Activated CD4-positive, alpha-beta T cell treated with anti-CD3 and anti-CD28 coated beads for 36 hours (primary cell): ENCODE measurements at regions of chrX and their contacts with region 1.

Region 1: GRCh38 chrX:101051549-101052302 is at the start of gene TRMT2B:
- DNase-seq: peak; percentile 90
- ATAC-seq: peak; percentile 88
- H3K4me3 Mint-ChIP-seq: peak within 1 kb of the TSS; percentile 83
- H3K27ac Mint-ChIP-seq: peak within 1 kb of the TSS; percentile 94
- H3K4me1 Mint-ChIP-seq: peaks cover 29% of the 10 kb centered on the region
- H3K27me3 Mint-ChIP-seq: no peaks in the 10 kb centered on the region
- total RNA-seq, gene TRMT2B: 20.6 to 24.3 TPM

Region 2: DNA sequence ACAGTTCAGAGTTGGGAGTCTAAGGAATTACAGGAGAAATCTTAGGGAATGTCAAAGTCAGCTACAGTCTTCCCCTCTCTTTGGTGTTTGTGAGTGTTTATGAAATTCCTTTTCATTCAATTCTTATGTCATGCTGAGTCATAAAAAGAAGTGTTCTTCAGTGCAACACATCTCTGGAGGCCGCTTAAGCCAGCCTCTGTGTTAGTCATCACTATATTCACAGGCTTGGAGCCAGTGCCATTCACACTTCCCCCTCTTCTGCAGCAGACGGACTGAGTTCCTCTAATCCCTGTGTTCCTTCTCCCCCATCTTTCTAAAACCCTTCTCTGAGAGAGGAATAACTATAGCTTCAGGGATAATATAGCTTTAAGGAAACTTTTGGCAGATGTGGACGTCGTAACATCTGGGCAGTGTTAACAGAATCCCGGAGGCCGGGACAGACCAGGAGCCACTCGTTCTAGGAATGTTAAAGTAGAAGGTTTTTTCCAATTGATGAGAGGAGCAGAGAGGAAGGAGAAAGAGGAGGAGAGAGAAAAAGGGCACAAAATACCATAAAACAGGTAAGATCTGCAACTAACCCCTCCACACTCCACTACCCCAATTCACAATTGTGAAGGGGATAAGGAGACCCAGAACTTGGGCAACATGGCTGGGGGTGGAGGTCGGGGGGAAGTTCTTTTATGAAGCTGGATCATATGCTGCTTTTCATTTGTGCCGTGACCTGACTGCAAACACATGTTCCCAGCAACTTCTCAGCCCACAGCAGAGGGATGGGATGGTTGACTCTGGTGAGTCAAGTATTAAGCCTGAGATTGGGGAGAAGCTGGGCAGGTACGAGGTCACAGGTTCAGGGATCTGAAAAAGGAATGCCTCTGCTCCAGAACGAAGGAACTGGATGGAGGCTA is 407.5 kb before region 1 on chrX and contains the start of gene SRPX2:
- CTCF ChIA-PET with region 1: no interaction called
- POLR2A ChIA-PET with region 1: no interaction called
- intact Hi-C with region 1: no loop called
- DNase-seq: peak; percentile 5
- ATAC-seq: no peak
- H3K4me3 Mint-ChIP-seq: no peak within 1 kb of the TSS
- H3K27ac Mint-ChIP-seq: no peak within 1 kb of the TSS
- H3K4me1 Mint-ChIP-seq: no peaks in the 10 kb centered on the region
- H3K27me3 Mint-ChIP-seq: peaks cover 13% of the 10 kb centered on the region
- total RNA-seq, gene SRPX2: not detected

Region 3: DNA sequence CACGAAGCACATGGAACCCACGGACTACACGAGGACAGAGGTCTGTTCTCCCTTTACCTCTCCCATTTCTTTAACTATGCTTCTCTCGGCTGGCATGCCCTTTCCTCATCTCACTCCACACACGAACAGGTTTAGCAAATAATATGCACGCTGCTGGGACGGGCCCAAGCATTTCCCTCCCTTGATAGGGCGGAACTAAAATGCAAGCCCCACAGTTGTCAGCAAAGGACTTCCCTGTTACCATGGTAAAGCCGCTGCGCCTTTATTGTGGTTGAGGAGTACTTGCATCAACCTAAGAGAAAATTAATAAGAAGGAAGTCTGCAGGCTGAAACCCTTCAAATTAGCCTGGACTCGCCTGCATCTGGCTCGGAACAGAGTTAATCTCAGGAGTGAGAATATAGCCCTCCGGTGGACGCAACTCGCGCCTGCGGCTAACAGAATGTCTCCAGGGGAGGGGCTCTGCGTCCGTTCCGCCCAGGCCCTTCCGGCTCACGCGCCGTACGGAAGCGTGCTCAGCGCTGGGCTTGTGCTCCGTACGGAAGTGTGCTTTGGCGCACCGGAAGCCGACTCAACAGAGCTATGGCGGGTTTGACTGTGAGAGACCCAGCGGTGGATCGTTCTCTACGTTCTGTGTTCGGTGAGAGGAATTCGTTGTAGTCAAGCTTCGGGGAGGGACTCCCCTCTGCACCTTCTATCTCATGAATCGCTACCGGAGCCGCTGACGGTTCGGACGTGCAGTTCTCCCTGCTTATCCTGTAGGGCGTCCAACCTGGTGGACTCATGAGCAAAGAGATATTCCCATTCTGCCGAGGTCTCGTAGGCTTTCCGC is 231.7 kb before region 1 on chrX and contains the start of gene CSTF2:
- CTCF ChIA-PET with region 1: no interaction called
- POLR2A ChIA-PET with region 1: no interaction called
- intact Hi-C with region 1: loop called in 1 of 2 experiments (anchors 5 kb)
- DNase-seq: peak; percentile 89
- ATAC-seq: peak; percentile 98
- H3K4me3 Mint-ChIP-seq: peak within 1 kb of the TSS; percentile 93
- H3K27ac Mint-ChIP-seq: peak within 1 kb of the TSS; percentile 99
- H3K4me1 Mint-ChIP-seq: peaks cover 8% of the 10 kb centered on the region
- H3K27me3 Mint-ChIP-seq: peaks cover 2% of the 10 kb centered on the region
- total RNA-seq, gene CSTF2: 53.8 to 54.3 TPM

Region 4: DNA sequence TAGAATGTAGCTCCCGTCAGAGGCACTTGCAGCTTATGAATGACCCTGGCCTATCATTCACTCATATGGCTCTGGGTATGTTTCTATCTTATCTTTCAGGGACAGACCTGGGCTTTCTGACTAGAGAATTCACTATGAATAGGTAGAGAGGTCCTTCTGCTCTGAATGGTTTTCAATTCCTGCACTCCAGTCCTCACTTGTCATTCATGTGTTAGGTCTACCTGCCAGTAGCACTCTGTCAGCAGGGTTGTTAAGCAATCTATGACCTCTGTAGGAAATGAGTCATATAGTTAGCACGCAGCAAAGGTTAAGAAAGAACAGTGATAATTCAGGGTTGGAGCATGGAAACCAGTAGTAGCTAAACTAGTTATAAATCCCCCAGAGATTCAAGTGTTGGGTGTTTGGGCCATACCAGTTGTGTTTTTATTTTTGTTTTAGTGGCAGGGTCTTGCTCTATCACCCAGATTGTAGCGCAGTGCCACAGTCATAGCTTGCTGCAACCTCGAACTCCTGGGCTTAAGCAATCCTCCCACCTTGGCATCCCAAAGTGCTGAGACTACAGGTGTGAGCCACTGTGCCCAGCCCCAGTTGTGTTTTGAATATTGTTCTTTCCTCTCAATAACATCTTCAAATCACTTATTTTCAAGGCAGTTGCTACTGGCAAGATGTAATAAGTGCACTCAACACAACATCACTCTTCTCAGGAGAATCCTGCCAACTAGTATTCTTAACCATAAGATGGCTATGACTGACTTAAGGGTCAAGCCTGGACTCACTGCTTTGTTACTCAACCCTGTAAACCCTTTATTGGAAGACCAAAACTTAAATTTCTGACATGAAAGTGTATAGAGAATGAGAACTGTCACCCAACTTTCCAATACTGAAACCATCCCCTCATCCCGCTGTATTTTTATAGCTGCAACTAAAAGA is 57.1 kb before region 1 on chrX:
- CTCF ChIA-PET with region 1: no interaction called
- POLR2A ChIA-PET with region 1: no interaction called
- intact Hi-C with region 1: loop called in 1 of 2 experiments (anchors 5 kb)
- DNase-seq: peak; percentile 38
- ATAC-seq: peak; percentile 88
- H3K4me3 Mint-ChIP-seq: no peak overlapping the region
- H3K27ac Mint-ChIP-seq: peak overlapping the region; percentile 65
- H3K4me1 Mint-ChIP-seq: peaks cover 22% of the 10 kb centered on the region
- H3K27me3 Mint-ChIP-seq: no peaks in the 10 kb centered on the region

Region 5: DNA sequence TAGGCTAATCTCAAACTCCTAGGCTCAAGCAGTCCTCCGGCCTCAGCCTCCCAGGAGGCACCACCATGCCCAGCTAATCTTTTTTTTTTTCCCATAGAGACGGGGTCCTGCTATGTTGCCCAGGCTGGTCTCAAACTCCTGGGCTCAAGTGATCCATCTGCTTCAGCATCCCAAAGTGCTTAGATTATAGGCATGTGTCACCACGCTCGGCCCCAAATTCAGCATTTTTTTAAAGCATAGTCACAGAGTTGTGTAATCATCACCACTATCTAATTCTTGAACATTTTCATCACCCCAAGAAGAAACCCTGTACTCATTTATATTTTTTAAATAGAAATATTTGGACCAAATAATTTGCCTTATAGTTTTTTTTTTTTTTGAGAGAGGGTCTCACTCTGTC is 56.6 kb after region 1 on chrX:
- CTCF ChIA-PET with region 1: no interaction called
- POLR2A ChIA-PET with region 1: no interaction called
- intact Hi-C with region 1: no loop called
- DNase-seq: no peak
- ATAC-seq: no peak
- H3K4me3 Mint-ChIP-seq: no peak overlapping the region
- H3K27ac Mint-ChIP-seq: no peak overlapping the region
- H3K4me1 Mint-ChIP-seq: no peaks in the 10 kb centered on the region
- H3K27me3 Mint-ChIP-seq: no peaks in the 10 kb centered on the region

Region 6: DNA sequence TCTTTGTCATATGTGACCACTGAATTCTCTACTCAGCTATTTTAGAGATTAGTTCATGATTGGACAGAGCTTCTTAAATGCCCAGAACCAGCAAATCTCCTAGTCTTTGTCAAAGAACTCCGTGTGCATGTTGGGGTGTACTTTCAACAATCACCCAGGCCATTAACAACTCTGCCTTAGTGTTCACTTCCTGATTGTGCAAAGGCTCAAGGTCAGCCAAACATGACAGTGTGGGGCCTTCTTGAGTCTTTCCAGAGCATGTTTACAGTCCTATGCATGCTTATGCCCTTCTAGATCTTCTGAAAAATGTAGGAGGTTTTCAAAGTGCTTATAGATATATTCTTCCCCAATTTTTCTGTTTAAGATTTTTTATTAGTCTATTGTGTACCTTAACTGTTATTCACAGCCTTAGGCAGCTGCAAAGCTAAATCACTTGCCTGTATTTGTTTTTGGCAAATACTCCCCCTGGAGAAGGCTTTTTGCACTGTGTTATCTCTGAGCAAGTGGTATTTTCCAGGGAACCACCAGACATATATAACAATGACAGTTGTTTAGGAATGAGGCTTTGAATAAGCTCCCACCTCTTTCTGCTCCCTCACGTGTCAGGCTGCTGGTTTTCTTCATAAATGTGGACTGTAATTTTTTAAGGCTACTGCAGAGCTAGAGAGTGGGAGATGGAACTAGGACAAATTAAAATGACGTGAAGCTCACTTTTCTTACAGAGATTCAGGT is 143.9 kb after region 1 on chrX:
- CTCF ChIA-PET with region 1: no interaction called
- POLR2A ChIA-PET with region 1: no interaction called
- intact Hi-C with region 1: no loop called
- DNase-seq: no peak
- ATAC-seq: no peak
- H3K4me3 Mint-ChIP-seq: no peak overlapping the region
- H3K27ac Mint-ChIP-seq: no peak overlapping the region
- H3K4me1 Mint-ChIP-seq: no peaks in the 10 kb centered on the region
- H3K27me3 Mint-ChIP-seq: peaks cover 9% of the 10 kb centered on the region

Region 7: DNA sequence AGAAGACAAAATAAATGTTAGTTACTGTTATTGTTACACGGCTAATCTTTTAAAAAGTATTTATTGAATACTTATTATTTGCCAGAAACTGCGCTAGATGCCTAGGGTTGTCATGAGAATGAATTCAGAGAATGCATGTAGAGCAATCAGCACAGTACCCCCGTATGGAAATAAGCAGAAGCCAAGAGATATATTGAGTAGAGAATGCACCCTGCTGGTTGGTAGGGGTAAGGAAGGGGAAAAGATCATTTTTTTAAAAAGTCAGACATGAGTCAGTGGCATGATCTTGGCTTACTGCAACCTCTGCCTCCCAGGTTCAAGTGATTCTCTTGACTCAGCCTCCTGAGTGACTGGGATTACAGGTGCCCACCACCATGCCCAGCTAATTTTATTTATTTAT is 154.7 kb after region 1 on chrX:
- CTCF ChIA-PET with region 1: no interaction called
- POLR2A ChIA-PET with region 1: no interaction called
- intact Hi-C with region 1: loop called in 1 of 2 experiments (anchors 5 kb)
- DNase-seq: peak; percentile 12
- ATAC-seq: peak; percentile 83
- H3K4me3 Mint-ChIP-seq: no peak overlapping the region
- H3K27ac Mint-ChIP-seq: no peak overlapping the region
- H3K4me1 Mint-ChIP-seq: peaks cover 16% of the 10 kb centered on the region
- H3K27me3 Mint-ChIP-seq: no peaks in the 10 kb centered on the region

Region 8: DNA sequence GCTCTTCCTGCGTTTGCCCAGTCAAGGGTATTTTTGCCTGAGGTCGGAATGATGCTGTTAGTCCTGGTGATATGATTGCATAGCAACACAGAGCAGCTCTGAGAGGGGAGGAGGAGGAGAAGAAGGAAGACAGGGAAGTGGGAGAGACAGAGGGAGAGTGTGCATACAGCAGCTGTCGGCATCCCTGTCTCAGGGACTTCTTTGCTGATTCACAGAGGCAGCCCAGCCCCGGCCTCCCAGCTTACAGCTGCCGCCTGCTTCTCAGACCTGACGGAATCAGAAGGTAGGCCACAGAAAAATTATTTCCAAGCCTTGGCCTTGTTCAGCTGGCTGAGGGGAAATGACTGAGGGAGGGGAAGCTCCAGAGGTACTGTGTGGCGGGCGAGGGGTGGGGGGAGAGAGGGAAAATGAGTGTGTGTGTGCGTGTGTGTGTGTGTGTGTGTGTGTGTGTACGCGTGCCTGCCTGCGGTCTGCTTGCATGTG is 168.2 kb after region 1 on chrX:
- CTCF ChIA-PET with region 1: no interaction called
- POLR2A ChIA-PET with region 1: no interaction called
- intact Hi-C with region 1: no loop called
- DNase-seq: peak; percentile 16
- ATAC-seq: no peak
- H3K4me3 Mint-ChIP-seq: no peak overlapping the region
- H3K27ac Mint-ChIP-seq: no peak overlapping the region
- H3K4me1 Mint-ChIP-seq: peaks cover 10% of the 10 kb centered on the region
- H3K27me3 Mint-ChIP-seq: no peaks in the 10 kb centered on the region

Region 9: DNA sequence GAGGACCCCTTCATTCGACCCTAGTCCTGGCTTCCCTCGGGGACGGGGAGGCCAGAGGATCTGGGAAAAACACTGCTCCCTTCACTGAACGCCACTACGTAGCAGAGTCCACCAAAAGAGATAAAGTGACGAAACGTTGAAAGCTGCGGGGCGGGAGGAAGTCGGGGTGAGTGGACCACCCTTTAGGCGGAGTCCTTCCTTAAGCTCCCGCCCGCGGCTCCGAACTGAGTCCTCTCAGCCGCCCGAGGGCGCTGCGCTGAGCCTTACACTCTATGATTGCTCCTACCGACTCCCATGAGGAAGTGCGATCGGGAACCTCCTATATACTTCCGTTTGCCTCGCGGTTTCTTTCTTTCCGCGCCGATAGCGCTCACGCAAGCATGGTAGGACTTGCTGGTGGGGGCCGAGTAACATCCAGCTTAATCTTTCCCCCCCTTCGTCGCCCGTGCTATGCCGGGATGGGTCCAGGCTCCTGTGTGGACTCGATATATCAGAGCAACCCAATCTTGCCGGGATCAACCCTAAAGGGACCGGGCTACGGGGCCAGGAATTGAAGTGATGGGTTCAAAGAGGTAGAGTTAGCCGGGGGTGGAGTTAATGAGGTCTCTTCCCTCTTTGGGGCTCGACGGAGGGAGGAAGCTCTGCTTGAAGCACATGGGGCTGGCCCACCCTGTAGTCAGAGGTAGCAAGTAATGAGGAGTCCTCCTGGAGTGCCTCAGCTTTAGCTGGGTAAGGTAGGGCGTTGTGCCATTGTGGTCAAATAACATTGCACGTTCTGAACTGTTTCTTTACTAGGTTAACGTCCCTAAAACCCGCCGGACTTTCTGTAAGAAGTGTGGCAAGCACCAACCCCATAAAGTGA is 339.2 kb after region 1 on chrX and contains the start of gene RPL36A:
- CTCF ChIA-PET with region 1: no interaction called
- POLR2A ChIA-PET with region 1: no interaction called
- intact Hi-C with region 1: loop called in 1 of 2 experiments (anchors 5 kb)
- DNase-seq: peak; percentile 90
- ATAC-seq: peak; percentile 97
- H3K4me3 Mint-ChIP-seq: peak within 1 kb of the TSS; percentile 95
- H3K27ac Mint-ChIP-seq: peak within 1 kb of the TSS; percentile 96
- H3K4me1 Mint-ChIP-seq: peaks cover 6% of the 10 kb centered on the region
- H3K27me3 Mint-ChIP-seq: peaks cover 3% of the 10 kb centered on the region
- total RNA-seq, gene RPL36A: 340 to 709 TPM